Posterior vena cava (tissue), 2 donors: ENCODE measurements at regions of chr10 and their contacts with region 1.

Region 1: GRCh38 chr10:106751091-106751490 is 413.4 kb downstream of the SORCS1 start:
- DNase-seq: no peak

Region 2: GRCh38 chr10:106711313-106711906 is 39.7 kb before region 1 on chr10:
- intact Hi-C with region 1: loop called in 1 of 2 experiments (anchors 2 kb)
- DNase-seq: peak; percentile 84

Region 3: GRCh38 chr10:107356396-107356795 is 605.3 kb after region 1 on chr10:
- intact Hi-C with region 1: no loop called
- DNase-seq: no peak